ENCODE measurements at regions of chr2 and their contacts with region 1.

Region 1: DNA sequence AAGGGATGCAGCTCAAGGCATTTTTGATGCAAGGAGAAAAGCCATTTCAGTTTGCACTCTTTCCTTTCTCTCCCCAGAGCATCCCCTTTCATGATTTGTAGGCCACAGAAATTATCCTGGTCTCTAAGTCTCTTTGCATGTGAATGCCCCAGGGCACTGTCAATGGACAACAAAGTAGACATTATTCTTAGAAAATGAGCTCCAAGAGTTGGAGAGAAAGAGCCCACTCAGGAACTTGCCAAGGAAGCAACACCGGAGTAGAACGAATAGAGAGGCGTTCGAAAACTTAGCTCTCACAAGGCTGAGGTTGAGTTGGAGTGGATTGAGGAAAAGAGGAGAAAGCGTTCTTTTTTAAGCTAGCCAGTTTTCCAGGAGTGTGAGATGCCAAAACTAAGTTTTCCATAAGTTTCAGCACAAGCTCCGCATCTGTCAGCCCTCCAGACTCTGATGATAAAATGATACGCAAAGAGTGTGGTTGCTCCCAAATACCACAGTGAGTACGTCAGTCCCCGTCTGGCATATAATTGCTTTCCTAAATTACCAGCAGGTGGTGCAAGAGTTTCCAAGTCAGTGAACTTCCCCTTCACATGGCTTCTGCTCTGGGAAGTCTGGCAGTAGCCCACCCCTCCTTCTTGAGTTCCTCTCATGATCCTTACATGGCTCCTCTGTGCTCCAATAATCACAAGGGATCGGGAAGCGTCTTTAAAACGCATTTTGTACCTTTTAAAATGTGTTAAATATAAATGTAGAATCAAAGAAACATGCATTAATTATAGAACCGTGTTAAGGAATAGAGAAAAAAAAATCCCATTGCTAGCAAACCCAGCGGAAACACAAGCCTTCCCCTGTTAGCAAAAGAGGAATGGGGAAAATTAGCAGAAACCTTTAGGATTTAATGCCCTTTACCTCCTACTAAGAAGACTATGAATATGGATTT is 1060.6 kb upstream of the FANCL start:
- DNase-seq: peak; percentile 62
- H3K4me3 ChIP-seq: no peak overlapping the region
- H3K27ac ChIP-seq: no peak overlapping the region
- H3K4me1 ChIP-seq: no peaks in the 10 kb centered on the region
- H3K27me3 ChIP-seq: no peaks in the 10 kb centered on the region
- CTCF ChIP-seq: peak; percentile 60 to 69

Region 2: GRCh38 chr2:59288771-59289170 is 13.0 kb before region 1 on chr2:
- CTCF ChIA-PET with region 1: no interaction called
- dilution Hi-C with region 1: no loop called
- in situ Hi-C with region 1: no loop called
- intact Hi-C with region 1: no loop called
- DNase-seq: no peak
- H3K4me3 ChIP-seq: no peak overlapping the region
- H3K27ac ChIP-seq: no peak overlapping the region
- H3K4me1 ChIP-seq: no peaks in the 10 kb centered on the region
- H3K27me3 ChIP-seq: peaks cover 2% of the 10 kb centered on the region
- CTCF ChIP-seq: no peak

Region 3: DNA sequence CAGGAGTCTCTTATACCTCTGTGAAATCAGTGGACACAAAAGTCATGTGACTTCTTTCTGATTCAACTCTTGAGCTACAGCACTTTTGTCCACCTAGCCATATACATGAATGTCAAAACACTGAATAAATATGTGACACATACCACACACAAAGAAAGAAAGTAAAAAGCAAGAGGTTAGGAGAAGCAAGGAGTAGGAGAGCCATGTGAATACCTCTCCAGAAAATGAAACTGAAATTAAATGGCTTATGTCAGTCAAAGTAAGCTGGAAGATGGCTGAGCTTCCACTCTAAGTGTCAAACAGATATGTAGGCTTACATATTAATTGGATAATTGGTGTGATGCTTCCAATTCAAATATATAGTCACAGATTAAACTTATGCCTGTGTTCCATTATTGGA is 201.2 kb after region 1 on chr2:
- CTCF ChIA-PET with region 1: no interaction called
- dilution Hi-C with region 1: no loop called
- in situ Hi-C with region 1: no loop called
- intact Hi-C with region 1: no loop called
- DNase-seq: no peak
- H3K4me3 ChIP-seq: no peak overlapping the region
- H3K27ac ChIP-seq: no peak overlapping the region
- H3K4me1 ChIP-seq: no peaks in the 10 kb centered on the region
- H3K27me3 ChIP-seq: no peaks in the 10 kb centered on the region
- CTCF ChIP-seq: no peak

Region 4: GRCh38 chr2:60152226-60152833 is 850.6 kb after region 1 on chr2:
- CTCF ChIA-PET with region 1: interaction called, 3 read pairs
- dilution Hi-C with region 1: no loop called
- in situ Hi-C with region 1: no loop called
- intact Hi-C with region 1: loop called (anchors 5 kb)
- DNase-seq: peak; percentile 21
- H3K4me3 ChIP-seq: no peak overlapping the region
- H3K27ac ChIP-seq: no peak overlapping the region
- H3K4me1 ChIP-seq: no peaks in the 10 kb centered on the region
- H3K27me3 ChIP-seq: peaks cover 4% of the 10 kb centered on the region
- CTCF ChIP-seq: peak; percentile 85 to 92

Region 5: DNA sequence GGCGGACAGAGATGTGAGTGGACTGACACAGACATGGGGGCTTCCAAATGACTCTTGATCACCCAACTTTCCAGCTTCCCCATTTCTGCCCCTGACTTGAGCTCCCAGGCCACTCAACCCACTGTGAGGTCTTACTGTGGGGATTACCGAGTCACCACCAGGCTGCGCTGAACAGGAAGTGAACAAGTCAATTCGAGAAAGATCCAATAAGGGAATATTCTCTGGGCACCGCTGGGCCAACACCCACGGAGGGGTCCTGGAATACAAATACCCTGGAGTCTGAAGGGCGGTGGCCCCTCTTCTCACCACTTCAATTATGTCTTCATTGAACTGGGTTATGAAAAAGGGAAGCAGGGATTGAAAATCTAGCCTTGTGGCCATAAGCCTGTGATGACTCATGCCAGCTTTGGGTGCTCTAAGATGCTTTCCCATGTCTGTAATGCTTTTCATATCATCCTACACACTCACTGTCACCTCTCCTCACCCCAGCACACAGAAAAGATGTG is 1214.0 kb after region 1 on chr2:
- CTCF ChIA-PET with region 1: no interaction called
- dilution Hi-C with region 1: no loop called
- in situ Hi-C with region 1: no loop called
- intact Hi-C with region 1: no loop called
- DNase-seq: peak; percentile 62
- H3K4me3 ChIP-seq: no peak overlapping the region
- H3K27ac ChIP-seq: peak overlapping the region; percentile 7
- H3K4me1 ChIP-seq: peaks cover 35% of the 10 kb centered on the region
- H3K27me3 ChIP-seq: no peaks in the 10 kb centered on the region
- CTCF ChIP-seq: no peak

Region 6: DNA sequence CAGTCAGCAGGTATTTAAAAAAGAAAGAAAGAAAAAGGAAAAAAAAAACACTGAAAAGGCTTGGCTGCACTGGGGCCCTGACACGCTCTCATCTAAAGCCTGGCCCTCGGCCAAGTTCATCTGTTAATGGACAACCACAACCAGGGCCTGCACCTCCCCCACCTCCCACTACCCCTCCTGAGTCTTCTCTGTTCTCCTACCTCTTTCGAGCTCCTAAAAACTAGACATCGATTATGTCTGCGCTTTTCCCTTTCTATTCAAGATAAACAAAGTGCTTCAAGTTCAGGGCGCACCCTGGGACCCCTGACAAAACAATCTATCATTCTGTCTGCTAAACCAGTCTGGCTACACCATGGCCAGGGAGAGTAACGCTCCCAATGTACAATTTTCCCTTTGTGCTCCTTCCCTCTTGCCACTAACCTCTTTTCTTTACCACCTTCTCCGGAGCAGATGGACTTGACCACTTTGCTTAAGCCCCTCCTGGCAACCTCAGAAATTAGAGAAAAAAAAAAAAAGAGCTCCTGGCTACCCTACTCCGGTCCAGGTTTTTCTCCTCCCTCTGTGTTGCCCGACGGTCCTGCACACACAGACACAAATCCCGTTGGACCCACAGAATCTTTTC is 1229.0 kb after region 1 on chr2:
- CTCF ChIA-PET with region 1: no interaction called
- dilution Hi-C with region 1: no loop called
- in situ Hi-C with region 1: loop called in 1 of 2 experiments (anchors 25 kb)
- intact Hi-C with region 1: no loop called
- DNase-seq: peak; percentile 43
- H3K4me3 ChIP-seq: peak overlapping the region in 2 of 3 experiments; percentile 4 to 15
- H3K27ac ChIP-seq: no peak overlapping the region
- H3K4me1 ChIP-seq: peaks cover 14% of the 10 kb centered on the region
- H3K27me3 ChIP-seq: no peaks in the 10 kb centered on the region
- CTCF ChIP-seq: no peak

Region 7: DNA sequence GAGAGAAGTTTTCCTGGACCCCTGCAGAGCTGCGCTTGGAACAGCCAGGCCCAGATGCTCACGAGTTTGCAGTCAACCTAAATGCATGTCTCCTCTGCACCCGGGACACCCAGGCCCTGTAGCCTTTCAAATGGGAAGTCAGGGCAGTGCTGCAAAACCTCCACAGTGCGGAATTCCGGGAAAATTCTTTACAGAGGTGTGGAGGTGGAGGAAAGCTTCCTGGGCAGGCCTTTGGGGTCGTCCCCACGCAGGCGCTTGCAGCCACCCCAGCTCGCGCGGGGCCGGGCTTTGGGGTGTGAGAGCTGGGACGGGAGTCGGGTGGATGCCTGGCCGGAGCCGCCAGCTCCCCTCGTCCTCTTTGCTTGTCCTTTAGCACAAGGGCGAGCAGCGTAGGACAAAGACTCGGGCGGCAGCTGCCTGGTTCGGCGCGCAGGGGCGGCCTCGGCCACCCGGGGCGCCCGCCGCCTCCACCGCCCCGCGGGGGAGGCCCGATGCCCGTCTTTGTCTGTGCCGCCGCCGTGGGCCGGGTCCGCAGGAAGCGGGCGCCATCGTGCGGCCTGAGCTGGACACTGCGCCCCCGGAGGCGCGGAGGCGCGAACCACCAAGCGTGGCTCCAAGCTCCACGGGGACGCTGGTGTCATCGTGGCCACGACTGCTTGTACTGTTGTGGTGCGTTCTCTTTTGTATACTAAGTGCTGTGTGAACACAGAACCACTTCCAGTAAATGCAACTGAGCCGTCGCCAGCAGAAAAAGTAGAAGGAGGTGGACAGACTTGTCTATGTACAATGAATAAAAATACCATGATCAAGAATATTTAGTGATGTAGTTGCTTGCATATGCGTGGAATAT is 1279.9 kb after region 1 on chr2:
- CTCF ChIA-PET with region 1: no interaction called
- dilution Hi-C with region 1: no loop called
- in situ Hi-C with region 1: no loop called
- intact Hi-C with region 1: loop called (anchors 10 kb)
- DNase-seq: peak; percentile 37
- H3K4me3 ChIP-seq: peak overlapping the region; percentile 23 to 45 (median 45)
- H3K27ac ChIP-seq: no peak overlapping the region
- H3K4me1 ChIP-seq: peaks cover 20% of the 10 kb centered on the region
- H3K27me3 ChIP-seq: no peaks in the 10 kb centered on the region
- CTCF ChIP-seq: peak; percentile 84 to 93

Measured in mammary epithelial cell (primary cell).